Activated naive CD4-positive, alpha-beta T cell treated with anti-CD3 and anti-CD28 coated beads for 36 hours (primary cell): ENCODE measurements at regions of chr9 and their contacts with region 1.

Region 1: DNA sequence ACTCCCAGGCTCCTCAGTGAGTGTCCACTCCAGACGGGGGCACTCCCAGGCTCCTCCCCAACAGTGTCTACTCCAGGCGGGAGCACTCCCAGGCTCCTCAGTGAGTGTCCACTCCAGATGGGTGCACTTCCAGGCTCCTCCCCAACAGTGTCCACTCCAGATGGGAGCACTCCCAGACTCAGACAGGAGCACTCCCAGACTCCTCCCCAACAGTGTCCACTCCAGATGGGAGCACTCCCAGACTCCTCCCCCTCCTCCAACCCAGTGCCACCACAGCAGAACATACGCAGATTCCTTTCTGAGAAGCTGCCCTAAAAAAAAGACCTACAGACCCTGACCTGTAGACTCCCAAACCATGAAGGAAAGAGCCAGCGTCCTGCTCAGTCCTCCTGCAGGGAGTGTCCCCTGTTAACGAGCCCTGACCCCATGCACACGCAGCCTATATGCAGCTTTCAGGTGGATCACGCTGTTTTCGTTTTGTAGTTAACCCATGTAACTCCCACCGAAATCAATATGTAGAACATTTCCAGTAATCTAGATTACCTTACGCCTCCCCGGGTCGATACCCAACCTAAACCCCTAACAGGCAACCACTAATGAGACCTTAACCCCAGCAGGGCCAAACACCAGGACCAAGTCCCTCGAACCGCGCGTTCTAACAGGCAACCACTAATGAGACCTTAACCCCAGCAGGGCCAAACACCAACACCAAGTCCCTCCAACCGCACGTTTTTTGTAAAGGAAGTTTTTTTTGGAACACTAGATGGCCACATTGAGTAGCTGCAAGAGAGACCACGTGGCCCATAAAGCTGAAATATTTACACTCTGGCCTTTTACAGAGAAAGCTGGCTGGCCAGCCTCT is 15.7 kb downstream of the PNPLA7 start:
- DNase-seq: peak; percentile 29
- H3K4me3 Mint-ChIP-seq: no peak overlapping the region
- H3K27ac Mint-ChIP-seq: no peak overlapping the region
- H3K4me1 Mint-ChIP-seq: peaks cover 25% of the 10 kb centered on the region
- H3K27me3 Mint-ChIP-seq: no peaks in the 10 kb centered on the region

Region 2: DNA sequence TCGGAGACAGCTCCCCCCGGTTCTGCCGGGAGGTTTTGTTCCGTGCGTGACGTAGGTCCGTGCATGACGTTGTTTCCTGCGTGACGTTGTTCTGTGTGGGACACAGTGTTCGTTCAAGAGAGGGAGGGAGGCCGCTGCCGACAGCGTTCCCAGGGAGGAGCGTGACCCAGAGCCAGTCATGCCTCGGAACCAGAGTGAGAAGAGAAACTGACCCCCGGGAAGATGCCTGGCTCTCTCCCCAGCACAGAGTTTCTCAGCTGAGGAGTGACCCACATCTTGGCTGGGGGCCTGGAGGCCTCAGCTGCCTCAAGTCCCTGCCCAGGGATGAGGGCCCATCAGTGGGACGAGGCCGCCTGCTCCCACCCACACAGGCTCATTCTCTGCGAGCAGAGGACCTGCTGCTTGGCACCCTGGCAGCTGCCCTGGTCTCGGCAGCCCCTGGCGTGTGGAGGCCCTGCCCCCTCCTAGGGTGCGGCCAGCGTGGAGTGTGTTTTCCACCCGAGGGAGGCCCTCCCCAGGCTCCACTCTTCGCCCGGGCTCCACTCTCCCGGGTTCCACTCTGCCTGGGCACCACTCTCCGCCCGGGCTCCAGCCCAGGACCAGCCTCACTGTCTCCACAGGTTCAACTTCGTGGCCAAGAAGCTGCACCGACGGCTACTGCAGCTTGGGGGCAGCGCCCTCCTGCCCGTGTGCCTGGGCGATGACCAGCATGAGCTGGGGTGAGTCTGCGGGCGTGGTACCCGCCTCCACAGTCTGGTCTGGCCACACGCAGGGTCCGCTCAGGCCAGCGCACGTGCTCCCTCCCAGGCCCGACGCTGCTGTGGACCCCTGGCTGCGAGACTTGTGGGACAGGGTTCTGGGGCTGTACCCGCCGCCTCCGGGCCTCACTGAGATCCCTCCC is 321.1 kb before region 1 on chr9:
- CTCF ChIA-PET with region 1: no interaction called
- intact Hi-C with region 1: no loop called
- DNase-seq: no peak
- H3K4me3 Mint-ChIP-seq: no peak overlapping the region
- H3K27ac Mint-ChIP-seq: no peak overlapping the region
- H3K4me1 Mint-ChIP-seq: peaks cover 5% of the 10 kb centered on the region
- H3K27me3 Mint-ChIP-seq: no peaks in the 10 kb centered on the region

Region 3: GRCh38 chr9:137302176-137302994 is 232.1 kb before region 1 on chr9 and contains the start of gene NRARP:
- CTCF ChIA-PET with region 1: no interaction called
- intact Hi-C with region 1: loop called (anchors 5 kb)
- DNase-seq: peak; percentile 93
- H3K4me3 Mint-ChIP-seq: peak within 1 kb of the TSS; percentile 73
- H3K27ac Mint-ChIP-seq: no peak within 1 kb of the TSS
- H3K4me1 Mint-ChIP-seq: peaks cover 11% of the 10 kb centered on the region
- H3K27me3 Mint-ChIP-seq: peaks cover 12% of the 10 kb centered on the region
- total RNA-seq, gene NRARP: 1.8 to 2.2 TPM

Region 4: GRCh38 chr9:137551651-137552384 is 17.3 kb after region 1 on chr9 and contains the start of gene MRPL41:
- CTCF ChIA-PET with region 1: interaction called, 5 read pairs
- intact Hi-C with region 1: loop called (anchors 1 kb)
- DNase-seq: peak; percentile 86
- H3K4me3 Mint-ChIP-seq: peak within 1 kb of the TSS; percentile 79
- H3K27ac Mint-ChIP-seq: peak within 1 kb of the TSS; percentile 51
- H3K4me1 Mint-ChIP-seq: peaks cover 20% of the 10 kb centered on the region
- H3K27me3 Mint-ChIP-seq: no peaks in the 10 kb centered on the region
- total RNA-seq, gene MRPL41: 39.3 to 41.0 TPM